Endothelial cell of umbilical vein (primary cell): ENCODE measurements at regions of chr7 and their contacts with region 1.

Region 1: DNA sequence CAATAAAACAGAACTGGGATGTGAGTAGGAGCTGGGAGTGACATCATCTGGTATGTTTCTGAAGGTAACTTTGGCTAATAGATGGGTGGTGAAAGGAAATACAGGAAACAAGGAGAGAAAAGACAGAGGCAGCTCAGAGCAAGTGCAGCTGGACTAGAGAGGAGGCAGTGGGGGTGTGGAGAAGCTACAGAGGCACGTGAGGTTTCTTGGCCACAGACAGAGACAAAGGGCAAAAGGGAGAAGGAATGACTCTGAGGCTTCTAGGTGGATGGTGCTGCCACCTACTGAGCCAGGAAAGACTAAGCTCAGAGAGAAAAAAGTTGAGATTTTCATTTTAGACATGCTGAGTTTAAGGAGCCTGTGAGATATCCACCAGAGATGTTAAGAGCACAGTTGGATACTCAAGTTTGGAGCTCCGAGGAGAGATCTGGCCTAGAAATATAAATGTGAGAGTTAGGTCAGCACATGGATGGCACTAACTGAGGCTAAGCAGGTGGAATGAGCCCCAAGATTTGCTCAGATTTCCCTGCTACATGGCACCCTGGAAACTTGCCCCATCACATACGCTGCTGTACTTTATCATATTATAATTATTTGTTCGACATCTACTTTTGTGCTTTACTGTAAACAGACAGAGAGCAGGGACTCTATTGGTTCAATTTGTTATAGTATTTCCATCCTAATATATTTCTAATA is 293.0 kb upstream of the IMMP2L start:
- DNase-seq: peak; percentile 71
- H3K4me3 ChIP-seq: no peak overlapping the region
- H3K27ac ChIP-seq: no peak overlapping the region
- H3K4me1 ChIP-seq: peaks cover 3% of the 10 kb centered on the region
- H3K27me3 ChIP-seq: no peaks in the 10 kb centered on the region
- CTCF ChIP-seq: peak; percentile 63 to 66
- POLR2A ChIP-seq: no peak

Region 2: DNA sequence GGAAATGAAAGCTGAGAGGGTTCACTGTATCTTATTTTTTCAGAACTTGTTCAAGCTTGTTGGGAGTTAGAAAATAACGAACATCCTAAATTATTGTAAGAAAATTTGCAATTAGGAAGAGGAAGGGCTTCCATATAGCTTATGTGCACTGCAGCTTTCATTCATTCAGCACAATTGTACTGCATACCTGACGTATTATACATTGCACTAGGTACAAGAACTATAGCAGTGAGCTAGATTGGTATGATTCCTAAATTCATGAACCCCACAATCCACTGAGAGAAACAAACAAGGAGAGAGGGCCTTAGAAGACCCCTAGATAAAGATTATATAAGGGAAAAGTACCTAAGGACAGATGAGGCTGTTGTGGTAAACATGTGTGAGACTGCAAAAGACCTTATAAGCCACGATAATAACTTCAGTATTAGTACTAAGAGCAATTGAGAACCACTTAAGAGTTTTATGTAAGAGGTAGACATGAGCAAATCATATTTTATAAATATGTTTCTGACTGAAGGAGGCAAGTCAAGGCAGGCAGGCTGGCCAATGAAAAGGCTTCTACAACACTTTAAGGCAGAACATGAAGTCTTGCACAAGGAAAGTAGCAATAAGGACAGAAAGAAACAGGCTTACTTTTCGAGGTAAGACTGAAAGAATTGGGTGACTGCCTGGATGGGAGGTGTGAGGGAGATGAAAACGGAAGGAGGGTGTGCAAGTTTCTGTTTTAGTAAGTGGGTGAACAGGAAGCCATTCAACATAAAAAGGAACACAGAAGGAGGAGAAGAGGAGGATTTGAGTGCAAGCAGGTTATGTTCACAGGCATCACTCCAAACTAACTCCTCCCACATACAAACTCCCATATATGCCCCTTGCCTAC is 842.3 kb before region 1 on chr7:
- CTCF ChIA-PET with region 1: no interaction called
- POLR2A ChIA-PET with region 1: no interaction called
- dilution Hi-C with region 1: no loop called
- intact Hi-C with region 1: no loop called
- DNase-seq: peak; percentile 5
- H3K4me3 ChIP-seq: no peak overlapping the region
- H3K27ac ChIP-seq: no peak overlapping the region
- H3K4me1 ChIP-seq: no peaks in the 10 kb centered on the region
- H3K27me3 ChIP-seq: no peaks in the 10 kb centered on the region
- CTCF ChIP-seq: no peak
- POLR2A ChIP-seq: no peak

Region 3: GRCh38 chr7:111752022-111752582 is 103.2 kb before region 1 on chr7:
- CTCF ChIA-PET with region 1: interaction called, 29 read pairs
- POLR2A ChIA-PET with region 1: no interaction called
- dilution Hi-C with region 1: no loop called
- intact Hi-C with region 1: loop called (anchors 1 kb)
- DNase-seq: peak; percentile 63
- H3K4me3 ChIP-seq: no peak overlapping the region
- H3K27ac ChIP-seq: no peak overlapping the region
- H3K4me1 ChIP-seq: no peaks in the 10 kb centered on the region
- H3K27me3 ChIP-seq: no peaks in the 10 kb centered on the region
- CTCF ChIP-seq: peak; percentile 85 to 89
- POLR2A ChIP-seq: no peak

Region 4: GRCh38 chr7:111780527-111780926 is 74.8 kb before region 1 on chr7:
- CTCF ChIA-PET with region 1: interaction called, 21 read pairs
- POLR2A ChIA-PET with region 1: no interaction called
- dilution Hi-C with region 1: no loop called
- intact Hi-C with region 1: no loop called
- DNase-seq: no peak
- H3K4me3 ChIP-seq: no peak overlapping the region
- H3K27ac ChIP-seq: no peak overlapping the region
- H3K4me1 ChIP-seq: no peaks in the 10 kb centered on the region
- H3K27me3 ChIP-seq: no peaks in the 10 kb centered on the region
- CTCF ChIP-seq: no peak
- POLR2A ChIP-seq: no peak

Region 5: GRCh38 chr7:111803015-111803758 is 52.1 kb before region 1 on chr7:
- CTCF ChIA-PET with region 1: interaction called, 11 read pairs
- POLR2A ChIA-PET with region 1: no interaction called
- dilution Hi-C with region 1: no loop called
- intact Hi-C with region 1: no loop called
- DNase-seq: no peak
- H3K4me3 ChIP-seq: no peak overlapping the region
- H3K27ac ChIP-seq: no peak overlapping the region
- H3K4me1 ChIP-seq: no peaks in the 10 kb centered on the region
- H3K27me3 ChIP-seq: no peaks in the 10 kb centered on the region
- CTCF ChIP-seq: no peak
- POLR2A ChIP-seq: no peak

Region 6: DNA sequence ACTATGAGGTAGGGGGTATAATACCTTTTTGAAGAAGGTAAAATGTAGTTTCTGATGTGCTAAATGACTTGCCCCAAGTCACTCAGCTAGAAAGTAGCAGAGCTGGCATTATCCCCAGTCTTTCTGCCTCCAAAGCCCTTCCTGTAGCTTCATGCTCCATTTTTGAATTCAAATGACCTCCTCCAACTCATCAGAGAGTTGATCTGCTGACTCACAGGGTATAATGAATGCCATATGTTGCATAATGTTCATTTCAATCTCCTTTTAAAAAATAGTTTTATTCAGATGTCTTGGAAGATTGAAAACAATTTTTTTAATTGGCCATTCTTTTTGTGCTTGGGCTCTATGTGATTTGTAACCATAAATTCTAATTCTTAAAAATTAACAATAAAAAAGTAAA is 20.2 kb before region 1 on chr7:
- CTCF ChIA-PET with region 1: interaction called, 23 read pairs
- POLR2A ChIA-PET with region 1: interaction called, 3 read pairs
- dilution Hi-C with region 1: no loop called
- intact Hi-C with region 1: no loop called
- DNase-seq: peak; percentile 72
- H3K4me3 ChIP-seq: no peak overlapping the region
- H3K27ac ChIP-seq: peak overlapping the region; percentile 9
- H3K4me1 ChIP-seq: peaks cover 49% of the 10 kb centered on the region
- H3K27me3 ChIP-seq: no peaks in the 10 kb centered on the region
- CTCF ChIP-seq: no peak
- POLR2A ChIP-seq: no peak

Region 7: GRCh38 chr7:111867348-111867931 is 12.1 kb after region 1 on chr7:
- CTCF ChIA-PET with region 1: interaction called, 27 read pairs
- POLR2A ChIA-PET with region 1: no interaction called
- dilution Hi-C with region 1: no loop called
- intact Hi-C with region 1: no loop called
- DNase-seq: no peak
- H3K4me3 ChIP-seq: no peak overlapping the region
- H3K27ac ChIP-seq: no peak overlapping the region
- H3K4me1 ChIP-seq: peaks cover 5% of the 10 kb centered on the region
- H3K27me3 ChIP-seq: no peaks in the 10 kb centered on the region
- CTCF ChIP-seq: no peak
- POLR2A ChIP-seq: no peak